ENCODE measurements at regions of chr1 and their contacts with region 1.

Region 1: GRCh38 chr1:18668796-18669404 is 38.3 kb downstream of the PAX7 start:
- DNase-seq: peak; percentile 75 to 91
- H3K4me3 ChIP-seq: peak overlapping the region; percentile 13; the same call in 1 of the 2 replicates
- H3K27ac ChIP-seq: peak overlapping the region; percentile 93
- H3K4me1 ChIP-seq: peaks cover 79% of the 10 kb centered on the region
- H3K27me3 ChIP-seq: no peaks in the 10 kb centered on the region
- CTCF ChIP-seq: no peak

Region 2: GRCh38 chr1:18643154-18644012 is 25.5 kb before region 1 on chr1:
- CTCF ChIA-PET with region 1: interaction called, 13 read pairs
- POLR2A ChIA-PET with region 1: no interaction called
- intact Hi-C with region 1: loop called (anchors 2 kb)
- DNase-seq: no peak
- H3K4me3 ChIP-seq: no peak overlapping the region
- H3K27ac ChIP-seq: no peak overlapping the region
- H3K4me1 ChIP-seq: no peaks in the 10 kb centered on the region
- H3K27me3 ChIP-seq: peaks cover 42% of the 10 kb centered on the region
- CTCF ChIP-seq: no peak

Region 3: DNA sequence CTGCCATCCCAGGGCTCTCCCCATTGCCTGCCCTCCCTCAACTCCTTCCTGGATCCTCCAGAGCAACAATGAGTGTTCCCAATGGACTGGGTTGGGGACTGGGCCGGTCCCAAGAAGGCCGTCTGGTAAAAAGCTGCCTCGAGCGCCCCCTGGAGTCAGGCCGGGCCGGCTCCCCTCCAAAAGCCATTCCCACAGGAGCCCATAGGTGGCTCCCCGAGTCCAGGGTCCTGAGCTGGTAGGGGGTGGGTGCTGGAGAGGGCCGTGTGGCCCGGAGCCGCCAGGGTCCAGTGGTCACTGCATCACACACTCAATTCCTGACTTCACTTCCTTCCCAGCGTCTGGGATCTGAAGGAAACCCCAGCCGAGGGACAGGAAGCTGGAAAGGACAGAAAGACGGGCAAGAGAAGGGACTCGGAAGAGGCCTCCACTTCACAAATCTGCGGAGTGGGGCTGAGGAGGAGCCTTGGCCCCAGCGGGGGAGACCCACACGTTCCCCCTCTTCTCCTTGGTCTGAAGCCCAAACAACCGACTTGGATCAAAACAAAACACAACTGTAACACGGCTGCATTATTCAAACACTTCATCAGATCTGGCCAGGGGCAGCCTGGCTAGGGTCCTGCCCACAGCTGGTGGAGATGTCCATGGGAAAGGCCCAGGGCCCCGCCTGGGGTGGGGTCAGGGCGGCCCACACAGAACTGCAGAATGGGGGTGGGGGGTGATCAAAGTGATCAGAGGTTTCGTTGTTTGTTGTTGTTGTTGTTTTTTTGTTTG is 244.3 kb after region 1 on chr1:
- CTCF ChIA-PET with region 1: no interaction called
- POLR2A ChIA-PET with region 1: no interaction called
- intact Hi-C with region 1: no loop called
- DNase-seq: peak in 1 of 2 experiments; percentile 77
- H3K4me3 ChIP-seq: no peak overlapping the region
- H3K27ac ChIP-seq: no peak overlapping the region
- H3K4me1 ChIP-seq: no peaks in the 10 kb centered on the region
- H3K27me3 ChIP-seq: no peaks in the 10 kb centered on the region
- CTCF ChIP-seq: peak; percentile 87